ENCODE measurements at regions of chr19 and their contacts with region 1.

Region 1: GRCh38 chr19:7104747-7105447 is 35.4 kb downstream of the ZNF557 start:
- DNase-seq: peak in 1 of 3 donors; percentile 21
- ATAC-seq: no peak
- H3K4me3 ChIP-seq: no peak overlapping the region
- H3K4me1 ChIP-seq: peaks cover 8% of the 10 kb centered on the region
- CTCF ChIP-seq: no peak

Region 2: GRCh38 chr19:7333198-7334118 is 228.6 kb after region 1 on chr19:
- intact Hi-C with region 1: loop called in 1 of 2 experiments (anchors 5 kb)
- DNase-seq: no peak
- ATAC-seq: no peak
- H3K4me3 ChIP-seq: no peak overlapping the region
- H3K4me1 ChIP-seq: no peaks in the 10 kb centered on the region
- CTCF ChIP-seq: no peak

Measured in mucosa of descending colon (tissue), 3 donors.